H1 (cell line): ENCODE measurements at regions of chr21 and their contacts with region 1.

Region 1: DNA sequence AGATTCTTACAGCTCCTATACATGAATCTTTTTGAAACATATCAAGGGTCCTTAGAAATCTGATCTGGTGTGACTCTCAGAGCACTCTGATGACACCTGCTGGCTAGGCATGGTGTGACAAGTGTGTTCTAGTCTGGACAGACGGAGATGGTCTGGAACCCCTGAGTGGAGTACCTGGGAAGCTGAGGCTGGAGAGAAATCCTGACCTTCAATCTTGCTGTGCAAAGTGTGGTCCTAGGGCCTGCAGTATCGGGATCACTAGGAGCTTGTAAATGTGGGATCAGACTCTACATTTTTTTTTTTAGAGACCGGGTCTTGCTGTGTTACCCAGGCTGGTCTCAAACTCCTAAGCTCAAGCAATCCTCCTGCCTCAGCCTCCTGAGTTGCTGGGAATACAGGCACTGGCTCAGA is 78.6 kb upstream of the SOD1 start:
- DNase-seq: peak in 1 of 2 experiments; percentile 85
- H3K4me3 ChIP-seq: no peak overlapping the region
- H3K27ac ChIP-seq: no peak overlapping the region
- H3K4me1 ChIP-seq: no peaks in the 10 kb centered on the region
- H3K27me3 ChIP-seq: no peaks in the 10 kb centered on the region
- CTCF ChIP-seq: peak; percentile 73 to 91 (median 86)
- EP300 ChIP-seq: no peak
- POLR2A ChIP-seq: no peak
- RAD21 ChIP-seq: peak; percentile 91 to 94

Region 2: DNA sequence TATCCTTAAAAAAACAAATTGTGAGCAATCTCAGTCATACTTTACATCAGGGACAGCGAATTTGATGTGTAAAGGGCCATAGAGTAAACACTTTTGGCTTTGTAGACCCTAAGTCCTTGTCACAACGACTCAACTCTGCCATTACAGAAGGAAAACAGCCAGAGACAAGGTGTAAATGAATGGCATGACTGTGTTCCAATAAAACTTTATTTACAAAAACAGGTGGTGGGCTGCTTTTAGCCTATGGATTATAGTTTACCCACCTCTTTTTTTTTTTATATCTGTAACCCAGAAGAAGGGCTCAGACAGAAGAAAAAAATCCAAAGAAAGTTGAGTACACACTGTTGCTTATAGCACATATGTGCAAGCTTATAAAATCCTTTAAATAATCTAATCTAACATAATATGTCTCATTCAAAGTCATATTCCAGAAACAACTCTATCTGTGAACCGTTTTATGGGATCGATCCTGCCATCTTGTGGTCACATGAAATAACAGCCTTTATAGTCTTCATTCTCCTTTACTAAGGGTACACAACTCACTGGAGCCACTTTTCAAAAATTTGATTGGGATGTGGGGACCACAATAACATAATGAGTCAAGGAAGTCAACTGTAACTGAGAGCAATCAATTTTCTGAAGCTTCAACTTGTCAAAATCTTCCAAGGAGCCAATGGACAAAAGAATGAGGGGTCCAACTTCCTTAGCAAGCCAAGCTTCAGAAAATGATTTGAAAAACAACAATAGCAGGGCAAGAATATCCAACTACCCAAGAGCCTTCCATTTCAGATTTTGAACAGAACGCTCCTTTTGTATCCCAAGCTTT is 400.4 kb before region 1 on chr21:
- CTCF ChIA-PET with region 1: interaction called, 11 read pairs
- POLR2A ChIA-PET with region 1: no interaction called
- DNase-seq: no peak
- H3K4me3 ChIP-seq: no peak overlapping the region
- H3K27ac ChIP-seq: no peak overlapping the region
- H3K4me1 ChIP-seq: no peaks in the 10 kb centered on the region; a peak in 1 of 7 replicates
- H3K27me3 ChIP-seq: no peaks in the 10 kb centered on the region
- CTCF ChIP-seq: peak in 2 of 3 experiments; percentile 46 to 55; a peak in 2 of 4 replicates
- EP300 ChIP-seq: no peak
- POLR2A ChIP-seq: no peak
- RAD21 ChIP-seq: peak; percentile 61 to 63

Region 3: DNA sequence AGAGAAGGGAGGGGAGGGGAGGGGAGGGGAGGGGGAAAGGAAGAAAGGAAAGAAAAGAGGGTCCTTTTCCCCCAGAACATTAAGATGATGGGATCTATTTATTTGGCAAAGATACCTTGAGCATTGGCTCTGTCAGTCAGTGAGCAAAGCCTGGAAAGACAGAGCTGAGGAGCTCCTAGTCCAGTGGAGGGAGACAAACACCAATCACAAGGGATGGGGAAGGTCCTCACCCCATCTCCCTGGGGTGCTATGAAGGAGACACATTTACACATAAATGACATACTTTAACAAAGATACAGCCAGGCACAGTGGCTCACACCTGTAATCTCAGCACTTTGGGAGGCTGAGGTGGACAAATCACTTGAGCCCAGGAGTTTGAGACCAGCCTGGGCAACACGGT is 81.9 kb before region 1 on chr21:
- CTCF ChIA-PET with region 1: interaction called, 14 read pairs
- POLR2A ChIA-PET with region 1: no interaction called
- DNase-seq: no peak
- H3K4me3 ChIP-seq: no peak overlapping the region
- H3K27ac ChIP-seq: no peak overlapping the region
- H3K4me1 ChIP-seq: peaks cover 0 to 8% (median 2%) of the 10 kb centered on the region in 4 experiments; a peak in 5 of 7 replicates
- H3K27me3 ChIP-seq: no peaks in the 10 kb centered on the region
- CTCF ChIP-seq: peak; percentile 42 to 61 (median 52)
- EP300 ChIP-seq: no peak
- POLR2A ChIP-seq: no peak
- RAD21 ChIP-seq: peak; percentile 70 to 79

Region 4: DNA sequence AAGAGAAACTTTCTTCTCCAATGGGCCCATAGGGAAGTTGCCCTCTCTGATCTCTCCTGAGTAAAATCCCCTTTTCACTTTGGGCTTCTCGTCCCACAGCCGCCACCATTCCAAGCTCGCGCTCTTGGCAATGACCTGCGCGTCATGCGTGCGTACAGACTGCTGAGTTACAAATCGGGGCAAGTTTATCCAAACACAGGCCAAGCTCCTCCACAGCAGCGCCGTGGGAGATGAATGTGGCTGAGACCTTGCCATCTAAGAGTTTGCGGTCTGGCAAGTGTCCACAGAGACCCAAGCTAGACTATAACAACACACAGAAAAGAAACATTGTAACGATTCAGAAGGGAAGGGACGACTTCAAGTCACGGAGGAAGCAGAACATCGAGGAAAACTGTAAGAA is 37.7 kb before region 1 on chr21:
- CTCF ChIA-PET with region 1: interaction called, 81 read pairs
- POLR2A ChIA-PET with region 1: no interaction called
- DNase-seq: no peak
- H3K4me3 ChIP-seq: no peak overlapping the region
- H3K27ac ChIP-seq: no peak overlapping the region; the same call in 1 of the 2 replicates
- H3K4me1 ChIP-seq: peaks cover 0 to 7% (median 4%) of the 10 kb centered on the region in 4 experiments; a peak in 2 of 7 replicates
- H3K27me3 ChIP-seq: no peaks in the 10 kb centered on the region
- CTCF ChIP-seq: no peak
- EP300 ChIP-seq: no peak
- POLR2A ChIP-seq: no peak
- RAD21 ChIP-seq: no peak

Region 5: DNA sequence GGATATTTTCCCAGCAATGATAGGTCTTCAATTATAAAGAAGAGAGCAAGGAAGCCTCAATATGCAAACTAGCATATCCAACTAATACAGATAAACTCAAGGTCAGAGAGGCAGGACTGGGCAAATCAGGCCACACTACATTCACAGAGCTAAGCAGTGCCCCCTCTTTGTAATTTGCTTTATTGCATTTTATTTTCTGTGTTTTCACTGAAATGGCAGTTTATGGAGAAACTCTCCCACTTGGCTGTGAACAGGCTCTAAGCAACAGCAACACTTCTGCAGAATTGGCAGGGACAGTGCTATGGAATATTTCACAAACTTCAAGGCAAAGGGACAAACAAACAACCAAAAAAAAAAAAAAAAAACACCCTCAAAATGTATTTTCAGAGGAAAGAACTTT is 14.8 kb before region 1 on chr21:
- CTCF ChIA-PET with region 1: interaction called, 107 read pairs
- POLR2A ChIA-PET with region 1: interaction called, 5 read pairs
- DNase-seq: no peak
- H3K4me3 ChIP-seq: no peak overlapping the region
- H3K27ac ChIP-seq: no peak overlapping the region
- H3K4me1 ChIP-seq: peaks cover 0 to 14% (median 8%) of the 10 kb centered on the region in 4 experiments; a peak in 6 of 7 replicates
- H3K27me3 ChIP-seq: no peaks in the 10 kb centered on the region
- CTCF ChIP-seq: peak in 2 of 3 experiments; percentile 32 to 36; a peak in 2 of 4 replicates
- EP300 ChIP-seq: no peak
- POLR2A ChIP-seq: no peak
- RAD21 ChIP-seq: peak; percentile 37 to 48

Region 6: DNA sequence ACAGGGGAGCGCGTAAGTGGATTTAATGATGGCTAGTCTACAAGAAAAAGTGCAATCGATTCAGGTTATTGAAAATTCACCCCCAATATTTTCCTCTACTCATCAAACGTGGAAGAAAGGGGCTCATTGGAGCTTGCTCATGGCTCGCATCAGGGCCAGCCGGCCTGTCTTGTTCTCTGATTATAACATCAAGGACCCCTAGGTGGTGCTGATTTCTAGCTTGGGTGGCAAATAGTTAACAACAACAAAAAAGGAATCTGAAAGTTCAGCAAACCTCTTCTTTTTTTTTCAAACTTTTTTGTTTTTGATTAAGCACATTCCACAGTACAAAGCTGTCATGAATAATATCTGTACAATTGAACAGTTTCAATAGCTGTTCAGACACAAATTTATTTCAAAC is 42.8 kb after region 1 on chr21:
- CTCF ChIA-PET with region 1: interaction called, 11 read pairs
- POLR2A ChIA-PET with region 1: no interaction called
- DNase-seq: no peak
- H3K4me3 ChIP-seq: no peak overlapping the region
- H3K27ac ChIP-seq: no peak overlapping the region
- H3K4me1 ChIP-seq: no peaks in the 10 kb centered on the region
- H3K27me3 ChIP-seq: no peaks in the 10 kb centered on the region
- CTCF ChIP-seq: peak; percentile 10 to 40 (median 31)
- EP300 ChIP-seq: no peak
- POLR2A ChIP-seq: no peak
- RAD21 ChIP-seq: peak; percentile 33 to 58

Region 7: GRCh38 chr21:31665397-31665796 is 84.5 kb after region 1 on chr21:
- CTCF ChIA-PET with region 1: no interaction called
- POLR2A ChIA-PET with region 1: no interaction called
- DNase-seq: no peak
- H3K4me3 ChIP-seq: no peak overlapping the region
- H3K27ac ChIP-seq: no peak overlapping the region
- H3K4me1 ChIP-seq: peaks cover 0 to 3% (median 2%) of the 10 kb centered on the region in 4 experiments; a peak in 5 of 7 replicates
- H3K27me3 ChIP-seq: no peaks in the 10 kb centered on the region
- CTCF ChIP-seq: peak in 2 of 3 experiments; percentile 1 to 3; a peak in 1 of 4 replicates
- EP300 ChIP-seq: no peak
- POLR2A ChIP-seq: no peak
- RAD21 ChIP-seq: no peak; a peak in 1 of 4 replicates